GM18951 (cell line): ENCODE measurements at regions of chr1 and their contacts with region 1.

Region 1: GRCh38 chr1:244599937-244600350 is 53.0 kb upstream of the DESI2 start:
- POLR2A ChIP-seq: no peak

Region 2: DNA sequence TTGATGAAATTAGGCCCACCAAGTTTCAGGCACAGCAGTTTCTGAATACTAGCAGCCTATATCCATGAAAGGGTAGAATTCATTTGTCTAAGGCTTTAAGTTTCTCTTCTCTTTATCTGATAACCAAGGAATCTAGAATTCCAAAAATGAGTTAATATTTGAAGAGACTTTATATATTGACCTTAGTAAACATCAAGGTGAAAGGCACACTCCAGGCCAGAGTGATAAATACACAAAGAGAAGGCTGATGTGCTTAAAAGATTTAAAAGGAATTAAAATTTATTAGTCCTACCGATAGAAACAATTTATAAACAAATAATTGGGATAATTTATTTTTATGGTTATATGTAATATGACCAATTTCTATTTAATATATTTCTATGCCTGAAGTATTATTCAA is 40.4 kb before region 1 on chr1:
- in situ Hi-C with region 1: no loop called
- POLR2A ChIP-seq: no peak

Region 3: GRCh38 chr1:244796718-244797406 is 196.9 kb after region 1 on chr1:
- in situ Hi-C with region 1: loop called (anchors 10 kb)
- POLR2A ChIP-seq: no peak

Region 4: GRCh38 chr1:245000872-245001188 is 400.9 kb after region 1 on chr1:
- in situ Hi-C with region 1: no loop called
- POLR2A ChIP-seq: no peak